ENCODE measurements at regions of chr14 and their contacts with region 1.

Region 1: GRCh38 chr14:67285876-67286452 is 44.7 kb downstream of the PALS1 start:
- DNase-seq: peak in 4 of 5 donors; percentile 24 to 35 (median 30)
- H3K4me3 ChIP-seq: no peak overlapping the region
- H3K4me3 Mint-ChIP-seq: no peak overlapping the region
- H3K27ac ChIP-seq: no peak overlapping the region
- H3K27ac Mint-ChIP-seq: no peak overlapping the region
- H3K4me1 ChIP-seq: no peaks in the 10 kb centered on the region
- H3K4me1 Mint-ChIP-seq: no peaks in the 10 kb centered on the region
- H3K27me3 ChIP-seq: no peaks in the 10 kb centered on the region
- H3K27me3 Mint-ChIP-seq: no peaks in the 10 kb centered on the region

Region 2: GRCh38 chr14:66359500-66359899 is 926.5 kb before region 1 on chr14:
- CTCF ChIA-PET with region 1: interaction called, 22 read pairs
- POLR2A ChIA-PET with region 1: no interaction called
- intact Hi-C with region 1: no loop called
- DNase-seq: peak in 4 of 5 donors; percentile 33 to 52 (median 49)
- H3K4me3 ChIP-seq: no peak overlapping the region
- H3K4me3 Mint-ChIP-seq: no peak overlapping the region
- H3K27ac ChIP-seq: no peak overlapping the region
- H3K27ac Mint-ChIP-seq: no peak overlapping the region
- H3K4me1 ChIP-seq: no peaks in the 10 kb centered on the region
- H3K4me1 Mint-ChIP-seq: no peaks in the 10 kb centered on the region
- H3K27me3 ChIP-seq: no peaks in the 10 kb centered on the region
- H3K27me3 Mint-ChIP-seq: peaks cover 3 to 7% of the 10 kb centered on the region in 2 donors

Region 3: DNA sequence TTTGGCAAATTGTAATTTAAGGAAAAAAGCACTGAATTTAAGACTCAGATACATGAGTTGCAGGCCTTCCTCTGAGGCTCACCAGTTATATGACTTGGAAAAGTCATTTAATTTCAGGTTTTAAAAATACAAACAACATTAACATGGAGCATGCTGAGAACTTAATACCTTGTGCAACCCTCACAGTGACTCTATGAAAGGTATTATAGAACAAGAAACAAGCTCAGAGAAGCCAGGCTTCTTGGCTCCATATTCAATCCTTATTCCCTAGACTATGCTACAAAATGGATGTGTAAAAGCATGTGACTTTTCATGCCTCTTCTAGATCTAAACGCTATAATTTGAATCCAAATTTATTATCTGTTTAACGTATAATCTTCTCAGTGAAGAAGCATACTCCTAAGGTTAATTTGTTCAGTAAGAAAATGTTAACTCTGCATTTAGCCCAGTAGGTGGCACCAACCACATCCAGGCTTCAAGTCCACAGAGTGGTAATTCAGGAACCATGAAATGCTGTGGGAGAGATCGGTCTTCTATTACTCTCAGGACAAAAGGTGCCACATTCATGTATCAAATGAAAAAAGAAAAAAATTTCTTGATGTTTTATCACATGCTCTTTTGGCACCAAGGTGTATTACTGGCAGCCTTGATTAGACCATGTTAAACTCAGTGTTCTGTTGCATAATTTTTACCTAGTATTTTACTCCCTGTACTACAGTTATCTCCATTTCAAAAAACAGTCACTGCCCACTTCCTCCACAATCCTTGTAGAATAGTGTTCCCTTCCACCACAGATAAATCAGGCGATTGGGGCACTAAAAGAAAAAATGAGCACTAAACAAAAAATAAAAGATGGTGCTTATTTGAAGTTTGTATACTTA is 790.5 kb before region 1 on chr14:
- CTCF ChIA-PET with region 1: interaction called, 5 read pairs
- POLR2A ChIA-PET with region 1: no interaction called
- intact Hi-C with region 1: loop called (anchors 1 kb)
- DNase-seq: peak; percentile 31 to 41 (median 39)
- H3K4me3 ChIP-seq: no peak overlapping the region
- H3K4me3 Mint-ChIP-seq: peak overlapping the region in 1 of 8 donors; percentile 12
- H3K27ac ChIP-seq: no peak overlapping the region
- H3K27ac Mint-ChIP-seq: no peak overlapping the region
- H3K4me1 ChIP-seq: peaks cover 3% of the 10 kb centered on the region
- H3K4me1 Mint-ChIP-seq: peaks cover 0 to 11% (median 9%) of the 10 kb centered on the region in 4 donors
- H3K27me3 ChIP-seq: no peaks in the 10 kb centered on the region
- H3K27me3 Mint-ChIP-seq: no peaks in the 10 kb centered on the region

Region 4: GRCh38 chr14:66624299-66624937 is 661.5 kb before region 1 on chr14:
- CTCF ChIA-PET with region 1: interaction called, 10 read pairs
- POLR2A ChIA-PET with region 1: no interaction called
- intact Hi-C with region 1: no loop called
- DNase-seq: peak in 4 of 5 donors; percentile 8 to 14 (median 12)
- H3K4me3 ChIP-seq: no peak overlapping the region
- H3K4me3 Mint-ChIP-seq: no peak overlapping the region
- H3K27ac ChIP-seq: no peak overlapping the region
- H3K27ac Mint-ChIP-seq: no peak overlapping the region
- H3K4me1 ChIP-seq: no peaks in the 10 kb centered on the region
- H3K4me1 Mint-ChIP-seq: peaks cover 10 to 16% (median 13%) of the 10 kb centered on the region in 4 donors
- H3K27me3 ChIP-seq: no peaks in the 10 kb centered on the region
- H3K27me3 Mint-ChIP-seq: no peaks in the 10 kb centered on the region

Region 5: GRCh38 chr14:67166450-67166853 is 119.5 kb before region 1 on chr14:
- CTCF ChIA-PET with region 1: interaction called, 89 read pairs
- POLR2A ChIA-PET with region 1: no interaction called
- intact Hi-C with region 1: loop called (anchors 1 kb)
- DNase-seq: peak; percentile 21 to 39 (median 23)
- H3K4me3 ChIP-seq: no peak overlapping the region
- H3K4me3 Mint-ChIP-seq: no peak overlapping the region
- H3K27ac ChIP-seq: no peak overlapping the region
- H3K27ac Mint-ChIP-seq: no peak overlapping the region
- H3K4me1 ChIP-seq: no peaks in the 10 kb centered on the region
- H3K4me1 Mint-ChIP-seq: no peaks in the 10 kb centered on the region
- H3K27me3 ChIP-seq: no peaks in the 10 kb centered on the region
- H3K27me3 Mint-ChIP-seq: no peaks in the 10 kb centered on the region

Region 6: DNA sequence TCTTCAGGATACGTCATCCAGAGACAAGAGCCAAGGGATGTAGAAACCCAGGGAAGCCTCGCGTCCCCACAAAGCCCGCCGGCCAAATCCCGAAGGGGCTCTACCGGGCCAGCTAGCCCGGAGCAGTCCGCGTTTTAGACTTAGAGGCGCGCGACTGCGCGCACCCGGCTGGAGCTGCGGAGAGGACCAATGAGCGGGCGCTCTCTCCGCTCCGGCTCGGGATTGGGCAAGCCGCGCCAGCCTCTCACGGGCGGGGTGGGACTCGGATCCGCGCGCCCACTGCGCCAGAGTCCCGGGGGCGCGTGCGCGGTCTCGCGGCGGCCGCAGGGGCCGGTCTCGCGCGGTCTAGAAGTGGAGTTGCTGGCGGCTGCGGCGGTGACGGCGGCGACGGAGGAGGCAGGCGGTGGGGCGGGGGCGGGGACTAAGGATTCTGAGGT is 45.0 kb before region 1 on chr14:
- CTCF ChIA-PET with region 1: interaction called, 9 read pairs
- POLR2A ChIA-PET with region 1: interaction called, 3 read pairs
- intact Hi-C with region 1: loop called (anchors 5 kb)
- DNase-seq: peak; percentile 90 to 92 (median 91)
- H3K4me3 ChIP-seq: peak overlapping the region; percentile 73 to 90
- H3K4me3 Mint-ChIP-seq: peak overlapping the region; percentile 81 to 94 (median 92)
- H3K27ac ChIP-seq: peak overlapping the region; percentile 61
- H3K27ac Mint-ChIP-seq: peak overlapping the region; percentile 83 to 93 (median 88)
- H3K4me1 ChIP-seq: peaks cover 17% of the 10 kb centered on the region
- H3K4me1 Mint-ChIP-seq: peaks cover 7 to 32% (median 18%) of the 10 kb centered on the region in 4 donors
- H3K27me3 ChIP-seq: no peaks in the 10 kb centered on the region
- H3K27me3 Mint-ChIP-seq: no peaks in the 10 kb centered on the region

Region 7: DNA sequence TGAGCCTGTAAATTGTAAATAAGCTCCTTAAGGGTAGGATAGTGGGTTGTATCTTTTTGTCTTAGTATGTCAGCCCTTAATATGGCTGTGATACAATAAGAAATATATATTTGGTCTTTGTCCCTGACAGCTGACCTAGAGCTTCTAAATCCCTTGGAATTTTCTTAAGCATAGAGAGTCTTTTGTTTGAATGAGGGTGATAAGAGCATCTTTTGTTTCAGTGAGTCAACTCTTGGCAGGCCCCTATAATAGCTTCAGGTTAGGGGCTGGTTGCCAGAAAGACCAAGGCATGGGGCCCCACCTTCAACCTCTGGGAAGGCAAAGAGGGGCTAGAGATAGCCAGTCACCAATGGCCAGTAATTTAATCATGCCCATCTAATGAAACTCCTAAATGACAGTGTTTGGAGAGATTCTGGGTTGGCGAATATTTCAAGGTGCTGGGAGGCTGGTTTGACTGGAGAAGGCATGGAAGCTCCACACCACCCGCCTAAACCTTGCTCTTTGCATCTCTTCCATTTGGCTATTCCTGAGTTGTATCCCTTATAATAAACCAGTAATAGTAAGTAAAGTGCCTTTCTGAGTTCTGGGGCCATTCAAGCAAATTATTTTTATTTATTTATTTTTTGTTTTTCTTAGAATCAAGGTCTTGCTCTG is 34.3 kb before region 1 on chr14:
- CTCF ChIA-PET with region 1: interaction called, 11 read pairs
- POLR2A ChIA-PET with region 1: no interaction called
- intact Hi-C with region 1: no loop called
- DNase-seq: no peak
- H3K4me3 ChIP-seq: no peak overlapping the region
- H3K4me3 Mint-ChIP-seq: no peak overlapping the region
- H3K27ac ChIP-seq: no peak overlapping the region
- H3K27ac Mint-ChIP-seq: no peak overlapping the region
- H3K4me1 ChIP-seq: no peaks in the 10 kb centered on the region
- H3K4me1 Mint-ChIP-seq: peaks cover 6 to 13% (median 9%) of the 10 kb centered on the region in 4 donors
- H3K27me3 ChIP-seq: no peaks in the 10 kb centered on the region
- H3K27me3 Mint-ChIP-seq: no peaks in the 10 kb centered on the region

Region 8: GRCh38 chr14:67704484-67705089 is 418.6 kb after region 1 on chr14:
- CTCF ChIA-PET with region 1: no interaction called
- POLR2A ChIA-PET with region 1: no interaction called
- intact Hi-C with region 1: no loop called
- DNase-seq: peak in 4 of 5 donors; percentile 50 to 57 (median 52)
- H3K4me3 ChIP-seq: no peak overlapping the region
- H3K4me3 Mint-ChIP-seq: no peak overlapping the region
- H3K27ac ChIP-seq: no peak overlapping the region
- H3K27ac Mint-ChIP-seq: no peak overlapping the region
- H3K4me1 ChIP-seq: no peaks in the 10 kb centered on the region
- H3K4me1 Mint-ChIP-seq: no peaks in the 10 kb centered on the region
- H3K27me3 ChIP-seq: no peaks in the 10 kb centered on the region
- H3K27me3 Mint-ChIP-seq: peaks cover 3 to 4% of the 10 kb centered on the region in 2 donors